Activated B cell treated with CpG ODN at 0.5 μM for 24 hours (primary cell): ENCODE measurements at regions of chr16 and their contacts with region 1.

Region 1: DNA sequence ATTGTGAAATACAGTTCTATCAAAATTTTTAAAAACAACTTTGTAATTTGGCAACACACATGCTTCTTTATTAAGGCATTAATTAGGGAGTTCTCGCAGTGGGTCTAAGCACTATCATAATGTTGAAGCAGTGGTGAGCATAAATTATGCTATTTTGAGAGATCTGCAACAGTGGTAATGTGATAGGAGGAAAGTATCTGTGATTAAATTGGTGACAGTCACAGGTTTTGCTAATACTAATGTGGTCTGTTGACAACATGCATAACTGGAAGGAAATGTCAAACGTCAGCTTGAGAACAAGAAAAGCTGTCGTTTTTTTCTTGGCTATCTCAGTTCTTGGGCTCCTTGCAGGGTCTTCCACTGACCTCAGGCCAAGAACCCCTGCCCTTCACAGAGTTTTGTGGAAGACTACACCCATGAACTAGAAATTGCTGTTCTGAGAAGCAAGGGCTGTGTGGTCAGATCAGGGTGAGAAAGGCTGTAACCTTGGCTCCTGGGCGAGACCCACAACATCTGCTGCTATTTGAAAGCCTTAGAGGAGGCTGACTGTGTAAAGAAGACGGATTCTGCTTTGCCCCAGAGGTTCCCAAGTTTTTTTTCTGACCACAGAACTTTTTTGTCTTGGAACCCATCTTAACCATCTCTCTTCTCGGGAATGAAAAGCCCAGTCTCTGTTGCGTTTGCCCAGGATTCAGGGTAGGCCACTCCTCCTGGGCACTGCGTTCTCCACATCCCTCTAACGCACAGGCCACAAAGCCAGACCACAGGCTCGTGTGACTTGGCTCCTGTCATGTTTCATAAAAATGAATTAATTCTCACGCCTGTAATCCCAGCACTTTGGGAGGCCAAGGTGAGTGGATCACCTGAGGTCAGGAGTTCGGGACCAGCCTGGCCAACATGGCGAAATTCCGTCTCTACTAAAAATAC is 13.9 kb downstream of the ATP2A1 start:
- DNase-seq: no peak
- ATAC-seq: no peak
- H3K4me3 Mint-ChIP-seq: no peak overlapping the region
- H3K27ac Mint-ChIP-seq: no peak overlapping the region
- H3K4me1 Mint-ChIP-seq: peaks cover 8% of the 10 kb centered on the region
- H3K27me3 Mint-ChIP-seq: no peaks in the 10 kb centered on the region
- CTCF ChIP-seq: no peak

Region 2: DNA sequence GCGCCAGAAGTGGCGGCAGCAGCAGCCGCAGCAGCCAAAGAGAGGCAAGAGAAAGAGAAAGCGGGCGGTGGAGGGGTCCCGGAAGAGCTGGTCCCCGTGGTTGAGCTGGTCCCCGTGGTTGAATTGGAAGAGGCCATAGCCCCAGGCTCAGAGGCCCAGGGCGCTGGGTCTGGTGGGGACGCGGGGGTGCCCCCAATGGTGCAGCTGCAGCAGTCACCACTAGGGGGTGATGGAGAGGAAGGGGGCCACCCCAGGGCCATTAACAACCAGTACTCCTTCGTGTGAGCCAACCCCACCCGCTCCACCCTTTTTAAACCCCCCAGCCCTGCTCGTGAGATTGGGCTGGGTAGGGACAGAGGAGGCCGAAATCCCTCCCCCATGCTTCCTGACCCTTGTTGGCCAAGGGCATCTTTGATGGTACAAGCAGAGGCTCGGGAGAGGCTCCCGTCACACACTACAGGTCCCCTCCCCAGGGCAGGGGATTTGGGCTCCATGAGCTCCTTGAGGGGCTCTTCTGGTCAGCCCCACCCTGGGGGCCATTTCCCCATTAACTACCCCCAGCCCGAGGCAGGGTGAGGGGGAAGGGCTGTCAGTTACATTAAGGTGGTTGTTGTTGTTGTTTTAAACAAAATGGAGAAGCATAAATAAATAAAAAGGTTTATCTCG is 18.6 kb before region 1 on chr16:
- CTCF ChIA-PET with region 1: no interaction called
- POLR2A ChIA-PET with region 1: interaction called, 10 read pairs
- intact Hi-C with region 1: loop called (anchors 2 kb)
- DNase-seq: peak; percentile 53
- ATAC-seq: peak; percentile 92
- H3K4me3 Mint-ChIP-seq: no peak overlapping the region
- H3K27ac Mint-ChIP-seq: no peak overlapping the region
- H3K4me1 Mint-ChIP-seq: peaks cover 2% of the 10 kb centered on the region
- H3K27me3 Mint-ChIP-seq: no peaks in the 10 kb centered on the region
- CTCF ChIP-seq: no peak

Region 3: GRCh38 chr16:28910086-28911031 is 18.1 kb after region 1 on chr16:
- CTCF ChIA-PET with region 1: no interaction called
- POLR2A ChIA-PET with region 1: interaction called, 11 read pairs
- intact Hi-C with region 1: loop called (anchors 1 kb)
- DNase-seq: no peak
- ATAC-seq: peak; percentile 73
- H3K4me3 Mint-ChIP-seq: peak overlapping the region; percentile 7
- H3K27ac Mint-ChIP-seq: peak overlapping the region; percentile 87
- H3K4me1 Mint-ChIP-seq: peaks cover 12% of the 10 kb centered on the region
- H3K27me3 Mint-ChIP-seq: no peaks in the 10 kb centered on the region
- CTCF ChIP-seq: no peak